ENCODE measurements at regions of chr7 and their contacts with region 1.

Region 1: DNA sequence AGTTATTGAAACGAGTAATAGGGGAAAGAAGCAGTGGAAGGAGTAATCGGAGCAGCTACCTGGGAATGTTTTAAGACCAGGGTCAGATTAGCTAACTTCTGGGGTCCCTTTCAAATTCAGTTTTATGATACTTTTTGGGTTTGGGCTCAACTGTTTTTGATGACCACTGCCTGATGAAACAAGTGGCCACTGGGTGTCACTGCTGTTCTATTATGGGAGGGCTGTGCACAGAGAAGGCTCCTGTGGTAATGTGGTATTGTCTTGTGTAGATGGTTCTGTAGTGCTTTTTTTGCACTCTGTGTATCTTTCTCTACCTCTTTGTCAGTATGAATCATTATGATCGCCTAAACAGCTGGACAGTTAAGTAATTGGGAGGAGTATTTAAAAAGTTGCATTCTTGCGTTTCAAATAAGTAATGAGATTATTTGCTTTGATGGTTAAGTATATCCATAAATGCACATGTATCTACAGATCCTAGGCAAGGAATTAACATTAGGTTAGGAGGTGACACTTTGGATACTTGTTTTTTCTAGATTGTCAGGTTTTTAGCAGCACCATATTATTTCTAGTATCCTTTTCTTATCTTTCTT is 128.4 kb downstream of the ABCA13 start:
- DNase-seq: no peak
- H3K4me3 ChIP-seq: no peak overlapping the region
- H3K27me3 ChIP-seq: no peaks in the 10 kb centered on the region
- CTCF ChIP-seq: peak; percentile 80

Region 2: DNA sequence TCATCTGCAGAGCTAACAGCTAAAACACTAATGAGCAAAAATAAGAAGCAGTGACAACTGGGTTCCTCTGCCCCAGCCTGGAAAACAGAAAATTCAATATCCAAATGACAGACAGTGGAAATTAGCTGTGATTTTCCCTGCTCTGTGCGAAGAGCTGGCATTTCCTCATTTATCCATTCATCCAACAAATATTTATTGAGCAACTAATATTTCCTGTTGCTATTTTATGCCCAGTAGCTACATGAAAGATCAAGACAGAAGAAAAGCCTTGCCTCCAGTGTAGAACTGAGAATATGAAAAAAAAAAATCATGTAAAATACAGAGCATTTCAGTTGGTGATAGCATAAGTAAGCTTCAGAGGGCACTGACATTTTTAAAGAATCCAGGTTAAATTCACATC is 12.5 kb after region 1 on chr7:
- CTCF ChIA-PET with region 1: interaction called, 23 read pairs
- POLR2A ChIA-PET with region 1: no interaction called
- DNase-seq: no peak
- H3K4me3 ChIP-seq: no peak overlapping the region
- H3K27me3 ChIP-seq: no peaks in the 10 kb centered on the region; the same call in 1 of the 2 replicates
- CTCF ChIP-seq: no peak